ENCODE measurements at regions of chr3 and their contacts with region 1.

Region 1: DNA sequence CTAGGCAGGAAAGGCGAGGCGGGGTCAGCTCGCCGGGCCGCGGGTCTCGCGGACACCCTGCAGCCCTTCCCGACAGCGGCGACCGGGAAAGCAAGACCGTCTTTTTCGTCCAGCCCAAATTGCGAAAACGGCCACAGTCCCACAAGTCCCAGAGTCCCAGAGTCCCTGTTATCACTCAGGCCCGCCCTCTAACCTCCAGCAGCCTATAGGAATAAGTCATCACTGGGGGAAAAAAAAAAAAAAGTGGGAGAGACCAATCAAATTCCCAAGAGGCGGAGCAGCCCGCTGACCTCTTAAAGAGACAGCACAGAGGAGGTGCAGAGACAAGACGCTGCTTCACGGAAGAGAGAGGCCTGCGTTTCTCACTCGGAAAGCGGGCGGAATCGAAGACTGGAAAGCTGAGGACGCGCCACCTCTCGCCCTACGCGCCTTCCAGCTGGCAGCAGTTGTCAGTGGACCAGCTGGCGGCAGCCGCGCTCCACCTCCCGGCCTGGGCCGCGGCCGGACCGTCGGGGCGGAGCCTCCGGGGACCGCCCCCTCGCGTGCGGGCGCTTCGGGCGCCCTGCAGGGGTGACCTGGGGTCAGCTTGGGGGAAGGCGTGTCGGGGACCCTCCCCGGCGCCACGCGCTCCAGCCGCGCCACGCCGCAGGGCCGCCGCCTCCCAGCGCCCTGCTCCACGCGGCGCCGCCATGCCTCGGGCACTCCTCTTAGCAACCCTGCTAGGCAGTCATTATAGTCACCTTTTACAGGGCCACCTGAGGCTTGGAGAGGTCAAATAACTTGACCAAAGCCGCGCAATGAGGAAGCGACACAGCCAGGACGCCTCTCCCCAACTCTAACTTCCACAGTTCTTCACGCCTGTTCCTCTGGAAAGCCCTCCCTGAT is at the start of gene TPRA1:
- DNase-seq: peak; percentile 84 to 94
- H3K4me3 ChIP-seq: peak within 1 kb of the TSS; percentile 54 to 93
- H3K27ac ChIP-seq: peak within 1 kb of the TSS; percentile 90 to 91
- H3K4me1 ChIP-seq: peaks cover 0 to 3% of the 10 kb centered on the region in 2 donors
- H3K27me3 ChIP-seq: no peaks in the 10 kb centered on the region
- CTCF ChIP-seq: peak in 2 of 4 experiments; percentile 29 to 37
- POLR2A ChIP-seq: peak; percentile 47 to 86
- total RNA-seq, gene TPRA1: 22.4 to 72.5 (median 37.7) TPM

Region 2: GRCh38 chr3:127544192-127544802 is 46.5 kb before region 1 on chr3:
- intact Hi-C with region 1: no loop called
- DNase-seq: peak; percentile 52 to 55
- H3K4me3 ChIP-seq: no peak overlapping the region
- H3K27ac ChIP-seq: no peak overlapping the region
- H3K4me1 ChIP-seq: peaks cover 0 to 6% of the 10 kb centered on the region in 2 donors
- H3K27me3 ChIP-seq: no peaks in the 10 kb centered on the region
- CTCF ChIP-seq: peak; percentile 53 to 64 (median 58)
- POLR2A ChIP-seq: no peak

Region 3: GRCh38 chr3:127672516-127673190 is 81.8 kb after region 1 on chr3 and contains the start of gene ABTB1:
- intact Hi-C with region 1: loop called (anchors 10 kb)
- DNase-seq: peak; percentile 82
- H3K4me3 ChIP-seq: peak within 1 kb of the TSS; percentile 49 to 85
- H3K27ac ChIP-seq: peak within 1 kb of the TSS; percentile 89 to 94
- H3K4me1 ChIP-seq: peaks cover 0 to 7% of the 10 kb centered on the region in 2 donors
- H3K27me3 ChIP-seq: no peaks in the 10 kb centered on the region
- CTCF ChIP-seq: peak in 1 of 4 experiments; percentile 10
- POLR2A ChIP-seq: peak; percentile 49 to 80
- total RNA-seq, gene ABTB1: 14.4 to 42.8 (median 28.8) TPM

Measured in uterus (tissue), 4 donors.